ENCODE measurements at regions of chr12 and their contacts with region 1.

Region 1: DNA sequence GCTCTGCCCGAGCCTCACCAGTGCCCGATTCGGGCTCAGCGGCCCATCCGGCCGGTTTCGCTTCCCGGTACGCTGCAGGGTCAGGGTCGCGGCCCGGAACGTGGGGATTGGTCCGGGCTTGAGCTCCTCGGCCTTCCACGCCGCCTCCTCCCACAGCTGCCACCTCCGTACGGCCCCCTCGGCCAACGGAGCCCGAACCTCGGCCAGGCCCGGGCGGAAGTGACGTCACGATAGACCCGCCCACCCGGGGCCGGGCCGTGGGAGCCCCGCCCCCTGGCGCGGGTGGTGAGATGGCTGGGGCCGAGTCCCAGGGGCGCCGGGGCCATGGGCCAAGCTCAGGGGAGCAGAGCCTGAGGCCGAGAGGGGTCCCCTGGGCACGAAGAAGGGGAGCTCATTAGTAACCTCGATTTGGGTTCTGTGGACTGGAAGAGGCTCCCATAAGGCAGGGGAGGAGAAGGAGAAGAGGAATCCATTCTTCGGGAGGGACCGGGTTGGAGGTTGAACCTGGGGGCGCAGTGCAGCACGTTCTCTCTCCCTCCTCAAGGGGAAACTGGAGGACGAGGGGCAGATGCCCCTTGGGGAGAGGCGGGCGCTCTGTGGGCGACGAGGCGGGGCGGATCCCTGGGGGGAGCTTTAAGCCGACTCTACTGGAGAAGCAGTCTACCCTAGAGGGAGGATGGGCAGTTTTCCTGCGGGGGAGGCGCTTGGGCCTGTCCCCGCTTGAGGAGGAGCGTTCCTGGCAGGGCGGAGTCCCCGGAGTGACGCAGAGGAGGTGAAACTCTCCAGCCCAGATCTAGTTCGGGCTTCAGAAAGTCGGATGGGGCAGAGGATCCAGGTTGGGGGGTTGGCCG is at the start of gene MLF2:
- DNase-seq: peak; percentile 96 to 99 (median 98)
- H3K4me3 ChIP-seq: peak within 1 kb of the TSS; percentile 80 to 93 (median 86)
- H3K27ac ChIP-seq: peak within 1 kb of the TSS; percentile 92 to 97
- H3K4me1 ChIP-seq: peaks cover 7 to 25% (median 24%) of the 10 kb centered on the region in 4 experiments
- H3K27me3 ChIP-seq: no peaks in the 10 kb centered on the region

Region 2: DNA sequence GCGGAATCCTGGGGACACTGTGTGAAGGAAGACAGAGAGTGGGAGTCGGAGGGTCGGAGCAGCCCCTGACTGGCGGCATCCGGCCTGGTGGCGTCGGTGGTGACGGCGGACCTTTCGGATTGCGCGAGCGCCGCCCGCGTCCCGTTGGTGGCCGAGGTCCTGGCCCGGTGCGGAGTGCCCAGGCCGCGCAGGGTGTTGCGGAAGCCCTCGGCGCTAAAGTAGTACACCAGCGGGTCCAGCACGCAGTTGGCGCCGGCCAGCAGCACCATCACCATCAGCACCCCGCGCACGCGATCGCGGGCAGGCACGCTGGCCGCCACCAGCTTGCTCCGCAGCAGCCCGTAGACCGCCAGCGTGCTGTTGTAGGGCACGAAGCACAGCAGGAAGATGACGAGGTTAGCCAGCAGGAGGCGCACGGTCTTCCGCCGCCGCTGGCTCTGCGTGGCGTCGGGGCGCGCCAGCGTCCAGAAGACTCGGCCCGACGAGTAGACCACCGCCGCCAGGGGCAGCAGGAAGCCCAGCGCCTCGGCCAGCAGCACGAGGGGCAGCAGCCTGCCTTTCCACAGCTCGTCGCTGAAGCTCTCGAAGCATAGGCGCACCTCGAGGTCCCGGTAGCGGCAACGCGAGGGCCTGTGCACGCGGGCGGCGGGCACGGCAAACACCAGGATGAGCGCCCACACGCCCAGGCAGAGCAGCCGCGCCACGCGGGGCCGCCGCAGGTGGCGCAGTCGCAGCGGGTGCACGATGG is 132.8 kb before region 1 on chr12:
- CTCF ChIA-PET with region 1: interaction called, 10 read pairs
- POLR2A ChIA-PET with region 1: no interaction called
- DNase-seq: peak; percentile 75 to 82 (median 80)
- H3K4me3 ChIP-seq: peak overlapping the region in 3 of 7 experiments; percentile 14 to 54 (median 48)
- H3K27ac ChIP-seq: no peak overlapping the region
- H3K4me1 ChIP-seq: peaks cover 4 to 34% (median 30%) of the 10 kb centered on the region in 4 experiments
- H3K27me3 ChIP-seq: no peaks in the 10 kb centered on the region

Region 3: GRCh38 chr12:6723607-6724396 is 29.3 kb before region 1 on chr12 and contains the start of gene COPS7A:
- CTCF ChIA-PET with region 1: interaction called, 13 read pairs
- POLR2A ChIA-PET with region 1: interaction called, 10 read pairs
- DNase-seq: peak; percentile 99 to 100 (median 100)
- H3K4me3 ChIP-seq: peak within 1 kb of the TSS; percentile 37 to 91 (median 75)
- H3K27ac ChIP-seq: peak within 1 kb of the TSS; percentile 51 to 87
- H3K4me1 ChIP-seq: peaks cover 8 to 23% (median 13%) of the 10 kb centered on the region in 4 experiments
- H3K27me3 ChIP-seq: no peaks in the 10 kb centered on the region

Region 4: DNA sequence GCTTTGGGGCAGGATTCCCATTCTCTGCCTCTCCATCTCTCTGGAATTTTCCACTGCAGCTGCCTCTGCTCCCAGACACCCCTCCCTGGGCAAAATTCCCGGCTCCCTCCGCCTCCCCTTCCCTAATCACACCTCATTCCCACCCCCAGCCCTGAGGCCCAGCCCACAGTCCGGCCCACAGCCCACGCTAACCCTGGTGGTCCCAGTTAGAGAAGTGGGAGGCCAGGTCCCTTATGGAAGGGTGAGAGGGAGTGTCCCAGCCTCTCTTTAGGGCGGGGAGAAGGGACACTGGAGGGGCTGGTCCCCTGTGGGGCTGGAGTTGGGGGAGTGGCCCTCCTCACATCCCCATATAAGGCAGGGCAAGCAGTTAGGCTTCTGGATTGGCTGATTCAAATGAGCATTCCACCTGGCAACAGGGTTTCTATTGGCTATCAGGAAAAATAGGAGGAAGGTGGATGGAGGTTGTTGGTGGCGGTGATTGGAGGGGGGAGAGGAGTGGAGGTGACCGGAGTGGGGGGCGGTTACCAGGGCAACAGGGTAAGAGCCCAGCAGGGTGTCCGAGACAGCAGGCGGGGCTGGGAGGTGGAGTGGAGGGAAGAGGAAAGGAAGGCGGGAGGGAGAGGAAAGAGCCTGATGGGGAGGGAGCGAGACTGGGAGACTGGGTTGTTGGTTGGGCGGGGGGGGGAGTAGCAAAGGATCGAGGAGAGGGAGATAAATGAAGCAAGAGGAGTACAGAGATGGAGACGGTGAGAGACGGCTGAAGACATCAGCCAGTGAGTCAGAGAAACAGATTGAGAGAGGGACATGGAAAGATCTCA is 11.1 kb after region 1 on chr12:
- CTCF ChIA-PET with region 1: interaction called, 237 read pairs
- POLR2A ChIA-PET with region 1: interaction called, 12 read pairs
- DNase-seq: peak; percentile 92 to 96 (median 95)
- H3K4me3 ChIP-seq: peak overlapping the region in 5 of 7 experiments; percentile 10 to 71 (median 48)
- H3K27ac ChIP-seq: peak overlapping the region in 1 of 2 experiments; percentile 64
- H3K4me1 ChIP-seq: peaks cover 8 to 44% (median 31%) of the 10 kb centered on the region in 4 experiments
- H3K27me3 ChIP-seq: peaks cover 0 to 16% (median 0%) of the 10 kb centered on the region in 5 experiments

Region 5: DNA sequence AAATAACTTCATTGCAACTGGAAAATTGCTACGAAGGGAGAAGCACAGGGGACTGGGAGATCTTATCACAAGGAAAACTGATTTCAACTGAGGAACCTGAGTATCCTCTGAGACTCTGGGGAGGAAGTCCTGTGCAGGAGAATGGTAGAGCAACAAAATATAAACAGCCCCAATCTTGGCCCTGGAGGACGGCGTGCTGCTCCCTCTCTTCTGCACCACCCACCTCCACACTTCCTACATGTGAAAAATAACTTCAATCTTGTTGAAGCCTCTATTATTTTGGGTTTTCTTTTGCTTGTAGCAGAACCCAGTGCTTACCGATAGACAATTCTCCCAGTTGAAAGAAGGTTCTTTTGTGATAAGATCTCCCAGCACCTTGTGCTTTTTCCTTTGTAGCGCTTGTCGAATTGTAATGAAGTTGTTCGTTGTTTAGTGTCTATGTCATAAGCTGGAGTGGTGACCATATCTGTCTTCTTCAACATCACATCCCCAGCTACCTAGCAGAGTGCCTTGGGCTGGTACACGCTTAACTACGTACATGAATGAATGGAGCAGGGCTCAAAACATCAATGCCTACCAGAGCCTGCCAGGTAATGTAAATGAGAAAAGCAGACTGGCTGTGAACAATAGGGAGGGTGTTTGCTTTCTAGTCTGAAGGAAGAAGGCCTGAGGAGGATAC is 33.4 kb after region 1 on chr12:
- CTCF ChIA-PET with region 1: interaction called, 32 read pairs
- POLR2A ChIA-PET with region 1: no interaction called
- DNase-seq: no peak
- H3K4me3 ChIP-seq: no peak overlapping the region
- H3K27ac ChIP-seq: no peak overlapping the region
- H3K4me1 ChIP-seq: peaks cover 2 to 39% (median 31%) of the 10 kb centered on the region in 4 experiments
- H3K27me3 ChIP-seq: no peaks in the 10 kb centered on the region

Region 6: DNA sequence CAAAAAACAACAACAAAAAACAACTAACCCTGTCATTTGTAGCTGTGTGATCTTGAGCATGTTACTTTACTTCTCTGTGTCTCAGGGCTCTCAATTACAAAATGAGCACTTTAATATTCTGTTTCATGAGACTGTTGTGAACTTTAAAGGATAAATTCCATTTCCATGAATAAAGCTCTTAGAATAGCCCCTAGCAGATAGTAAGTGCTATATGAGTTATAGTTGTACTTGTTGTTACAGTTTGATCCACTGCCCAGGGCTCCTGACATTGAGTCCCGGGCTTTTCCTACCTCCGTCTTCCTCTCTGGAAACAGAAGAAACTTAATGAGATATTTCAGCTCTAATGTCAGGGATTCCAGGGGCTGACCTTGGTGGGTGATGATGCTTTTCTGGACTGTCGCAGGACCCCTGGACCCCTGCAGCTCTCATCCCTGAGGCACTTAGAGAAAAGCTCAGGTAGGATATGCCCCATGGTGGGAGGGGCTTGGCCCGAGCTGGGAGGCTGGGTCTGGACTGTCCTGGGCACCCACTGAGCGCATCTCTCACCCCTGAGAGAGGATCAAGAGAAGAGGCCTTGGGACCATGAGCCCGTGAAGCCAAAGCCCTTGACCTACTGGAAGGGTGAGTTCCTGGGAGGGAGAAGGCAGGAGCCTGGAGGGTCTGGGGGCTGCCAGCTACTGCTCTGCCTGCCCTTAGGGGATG is 80.2 kb after region 1 on chr12:
- CTCF ChIA-PET with region 1: interaction called, 82 read pairs
- POLR2A ChIA-PET with region 1: interaction called, 5 read pairs
- DNase-seq: no peak
- H3K4me3 ChIP-seq: no peak overlapping the region
- H3K27ac ChIP-seq: no peak overlapping the region
- H3K4me1 ChIP-seq: peaks cover 0 to 15% (median 13%) of the 10 kb centered on the region in 4 experiments
- H3K27me3 ChIP-seq: peaks cover 0 to 7% (median 0%) of the 10 kb centered on the region in 5 experiments